ENCODE measurements at regions of chr19 and their contacts with region 1.

Region 1: GRCh38 chr19:39792999-39793546 is 14.4 kb downstream of the LEUTX start:
- DNase-seq: peak; percentile 25 to 92
- H3K4me3 ChIP-seq: peak overlapping the region; percentile 14 to 83 (median 72); a peak in 7 of 8 replicates
- H3K27ac ChIP-seq: no peak overlapping the region
- H3K4me1 ChIP-seq: peaks cover 2 to 10% (median 5%) of the 10 kb centered on the region in 4 experiments; a peak in 4 of 7 replicates
- H3K27me3 ChIP-seq: no peaks in the 10 kb centered on the region
- CTCF ChIP-seq: peak; percentile 79 to 90 (median 89)
- EP300 ChIP-seq: no peak
- POLR2A ChIP-seq: no peak
- RAD21 ChIP-seq: peak; percentile 81 to 89

Region 2: GRCh38 chr19:39590265-39590664 is 202.8 kb before region 1 on chr19:
- CTCF ChIA-PET with region 1: no interaction called
- POLR2A ChIA-PET with region 1: no interaction called
- DNase-seq: peak in 1 of 2 experiments; percentile 53
- H3K4me3 ChIP-seq: no peak overlapping the region
- H3K27ac ChIP-seq: no peak overlapping the region
- H3K4me1 ChIP-seq: no peaks in the 10 kb centered on the region
- H3K27me3 ChIP-seq: no peaks in the 10 kb centered on the region
- CTCF ChIP-seq: no peak
- EP300 ChIP-seq: no peak
- POLR2A ChIP-seq: no peak
- RAD21 ChIP-seq: no peak

Region 3: GRCh38 chr19:39765091-39766076 is 27.7 kb before region 1 on chr19:
- CTCF ChIA-PET with region 1: interaction called, 50 read pairs
- POLR2A ChIA-PET with region 1: no interaction called
- DNase-seq: peak; percentile 13 to 77
- H3K4me3 ChIP-seq: no peak overlapping the region
- H3K27ac ChIP-seq: no peak overlapping the region
- H3K4me1 ChIP-seq: peaks cover 0 to 12% (median 5%) of the 10 kb centered on the region in 4 experiments; a peak in 5 of 7 replicates
- H3K27me3 ChIP-seq: no peaks in the 10 kb centered on the region
- CTCF ChIP-seq: peak; percentile 72 to 80 (median 72)
- EP300 ChIP-seq: no peak
- POLR2A ChIP-seq: no peak
- RAD21 ChIP-seq: peak in 1 of 2 experiments; percentile 49; a peak in 3 of 4 replicates

Region 4: DNA sequence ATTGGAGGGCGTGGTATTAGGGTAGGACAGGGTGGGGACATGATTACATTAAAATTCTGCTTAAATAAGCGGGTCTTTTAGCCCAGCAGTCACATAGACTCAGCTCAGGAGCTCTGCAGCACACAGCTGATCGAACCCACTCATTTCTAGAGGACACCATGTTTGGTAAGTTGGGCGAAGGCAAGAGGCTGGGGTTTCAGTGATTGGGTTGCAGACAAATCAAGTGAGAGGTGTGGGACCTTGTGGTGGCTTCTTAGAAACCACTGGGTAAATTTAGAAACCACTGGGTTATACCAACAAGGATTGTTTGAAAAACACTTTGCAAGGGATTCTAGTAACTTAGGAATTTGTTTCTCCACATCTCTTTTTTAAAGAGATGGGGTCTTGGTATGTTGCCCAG is 14.3 kb before region 1 on chr19 and contains the start of gene LEUTX:
- CTCF ChIA-PET with region 1: interaction called, 16 read pairs
- POLR2A ChIA-PET with region 1: interaction called, 3 read pairs
- DNase-seq: no peak
- H3K4me3 ChIP-seq: no peak within 1 kb of the TSS
- H3K27ac ChIP-seq: no peak within 1 kb of the TSS
- H3K4me1 ChIP-seq: no peaks in the 10 kb centered on the region
- H3K27me3 ChIP-seq: no peaks in the 10 kb centered on the region
- CTCF ChIP-seq: no peak
- EP300 ChIP-seq: no peak
- POLR2A ChIP-seq: no peak
- RAD21 ChIP-seq: no peak
- total RNA-seq, gene LEUTX: not detected in 2 replicates

Region 5: GRCh38 chr19:39805104-39805503 is 12.0 kb after region 1 on chr19:
- CTCF ChIA-PET with region 1: interaction called, 75 read pairs
- POLR2A ChIA-PET with region 1: interaction called, 8 read pairs
- DNase-seq: no peak
- H3K4me3 ChIP-seq: no peak overlapping the region
- H3K27ac ChIP-seq: no peak overlapping the region
- H3K4me1 ChIP-seq: peaks cover 0 to 8% (median 0%) of the 10 kb centered on the region in 4 experiments; a peak in 4 of 7 replicates
- H3K27me3 ChIP-seq: peaks cover 0 to 2% (median 0%) of the 10 kb centered on the region in 4 experiments; a peak in 1 of 7 replicates
- CTCF ChIP-seq: no peak
- EP300 ChIP-seq: no peak
- POLR2A ChIP-seq: no peak
- RAD21 ChIP-seq: no peak

Region 6: DNA sequence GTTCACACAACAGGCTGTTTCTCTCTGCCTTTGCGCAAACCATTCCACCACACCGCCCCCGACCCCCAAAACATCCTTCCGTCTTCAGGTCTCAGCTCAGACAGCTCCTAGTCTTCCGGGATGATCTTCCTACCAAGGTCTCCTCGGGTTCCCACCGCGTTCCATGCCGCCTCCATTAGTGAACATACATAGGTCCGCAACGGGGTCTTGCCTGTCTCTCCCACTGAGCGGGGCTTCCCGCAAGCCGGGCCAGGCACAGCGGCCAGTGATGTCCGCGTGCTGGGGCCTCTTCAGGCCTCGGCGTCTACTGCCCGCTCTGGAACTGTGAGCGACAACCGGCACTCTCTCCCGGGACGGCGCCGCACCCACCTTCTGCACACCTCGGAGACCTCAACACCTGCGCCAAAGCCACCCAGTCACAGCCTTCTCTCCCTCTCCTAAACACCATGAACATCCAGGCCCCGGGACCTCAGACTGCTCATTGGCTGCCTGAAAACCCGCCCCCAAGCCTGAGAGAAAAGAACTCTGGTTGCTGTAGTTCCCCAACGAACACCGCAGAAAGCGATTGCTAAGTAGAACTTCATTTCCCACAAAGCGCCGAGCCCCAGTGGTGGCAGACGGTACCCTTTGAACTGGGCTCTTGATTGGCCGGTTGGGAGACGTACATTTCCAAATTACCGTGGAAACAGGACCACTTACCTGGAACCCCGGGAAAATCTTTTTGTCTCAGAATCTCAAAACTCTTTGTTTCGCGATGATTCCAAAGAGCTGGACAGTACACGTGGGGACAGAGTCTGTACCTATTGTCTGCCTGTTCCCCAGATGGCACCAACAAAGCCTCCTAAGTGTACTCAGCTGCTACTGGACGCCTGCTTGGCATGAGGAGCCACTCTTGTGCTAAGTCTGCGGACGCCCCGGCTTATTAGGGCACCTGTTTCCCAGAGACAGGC is 31.3 kb after region 1 on chr19:
- CTCF ChIA-PET with region 1: interaction called, 14 read pairs
- POLR2A ChIA-PET with region 1: interaction called, 3 read pairs
- DNase-seq: peak; percentile 75 to 86
- H3K4me3 ChIP-seq: peak overlapping the region; percentile 72 to 95 (median 89)
- H3K27ac ChIP-seq: peak overlapping the region; percentile 54
- H3K4me1 ChIP-seq: peaks cover 0 to 8% (median 3%) of the 10 kb centered on the region in 4 experiments; a peak in 4 of 7 replicates
- H3K27me3 ChIP-seq: no peaks in the 10 kb centered on the region
- CTCF ChIP-seq: no peak
- EP300 ChIP-seq: no peak
- POLR2A ChIP-seq: peak; percentile 22 to 75; a peak in 2 of 3 replicates
- RAD21 ChIP-seq: no peak